ENCODE measurements at regions of chr13 and their contacts with region 1.

Region 1: DNA sequence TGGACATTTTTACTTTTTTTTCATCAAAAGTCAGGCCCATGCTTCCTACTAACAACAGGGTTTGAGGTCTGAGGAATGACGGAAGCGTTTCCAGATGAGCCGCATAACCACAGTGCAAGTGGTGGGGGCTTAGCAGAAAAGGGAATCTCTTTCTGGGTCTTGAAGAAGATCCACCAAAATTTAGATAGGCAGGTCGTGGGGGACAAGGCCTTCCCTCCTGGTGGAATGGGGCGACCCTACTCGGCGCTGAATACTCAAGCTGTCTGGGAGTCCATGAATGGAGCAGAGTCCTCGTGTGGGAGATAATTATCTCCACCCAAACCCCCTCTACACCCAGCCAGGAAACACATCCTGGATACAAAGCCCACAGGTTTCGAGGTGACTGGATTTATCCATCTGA is 36.9 kb downstream of the CARS2 start:
- DNase-seq: no peak
- CTCF ChIP-seq: no peak

Region 2: GRCh38 chr13:110634558-110634957 is 34.5 kb before region 1 on chr13:
- CTCF ChIA-PET with region 1: no interaction called
- POLR2A ChIA-PET with region 1: no interaction called
- DNase-seq: no peak
- CTCF ChIP-seq: no peak

Region 3: GRCh38 chr13:110680851-110681250 is 11.8 kb after region 1 on chr13:
- CTCF ChIA-PET with region 1: interaction called, 10 read pairs
- POLR2A ChIA-PET with region 1: interaction called, 3 read pairs
- DNase-seq: peak; percentile 33
- CTCF ChIP-seq: peak; percentile 43

Region 4: GRCh38 chr13:111184458-111185401 is 515.7 kb after region 1 on chr13:
- CTCF ChIA-PET with region 1: no interaction called
- POLR2A ChIA-PET with region 1: no interaction called
- DNase-seq: peak; percentile 81
- CTCF ChIP-seq: no peak

Measured in GM10248 (cell line).